Activated CD8-positive, alpha-beta T cell treated with anti-CD3 and anti-CD28 coated beads, Interleukin-2, amount 10 ng/mL, durations not matched to agents 7 days and 5 days (primary cell): ENCODE measurements at regions of chr10 and their contacts with region 1.

Region 1: DNA sequence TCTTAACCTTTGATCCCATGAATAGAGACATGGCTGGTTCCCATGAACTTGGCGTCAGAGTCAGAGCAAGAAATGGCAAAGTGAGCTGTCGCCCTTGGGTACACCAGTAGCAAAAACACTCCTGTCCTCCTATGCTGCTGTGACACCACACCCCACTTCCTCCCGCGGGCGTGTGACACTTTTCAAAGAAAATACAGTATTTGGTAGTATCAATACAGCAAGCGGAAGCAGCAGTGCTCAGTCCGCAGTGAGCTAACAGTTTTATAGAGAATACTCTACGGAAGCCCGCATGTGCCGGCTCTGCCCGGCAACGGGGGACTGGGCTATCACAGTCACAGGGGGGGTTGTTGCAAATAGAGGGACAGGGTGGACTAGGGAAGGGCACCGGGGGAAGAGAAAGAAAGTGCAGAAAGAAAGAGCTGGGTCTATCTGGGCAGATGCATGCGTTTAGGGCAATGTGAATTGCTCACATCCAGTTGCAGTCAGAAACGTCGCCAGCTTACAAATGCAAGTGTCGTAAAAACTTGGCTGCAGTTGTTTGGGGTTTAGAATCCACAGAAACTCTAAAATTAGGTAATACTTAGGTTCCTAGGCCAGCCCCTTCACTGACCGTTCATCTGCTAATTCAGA is 49.8 kb downstream of the PRKCQ start:
- DNase-seq: peak; percentile 93
- ATAC-seq: peak; percentile 98
- H3K4me3 Mint-ChIP-seq: peak overlapping the region; percentile 77
- H3K27ac Mint-ChIP-seq: peak overlapping the region; percentile 98
- H3K4me1 Mint-ChIP-seq: peaks cover 85% of the 10 kb centered on the region
- H3K27me3 Mint-ChIP-seq: no peaks in the 10 kb centered on the region

Region 2: DNA sequence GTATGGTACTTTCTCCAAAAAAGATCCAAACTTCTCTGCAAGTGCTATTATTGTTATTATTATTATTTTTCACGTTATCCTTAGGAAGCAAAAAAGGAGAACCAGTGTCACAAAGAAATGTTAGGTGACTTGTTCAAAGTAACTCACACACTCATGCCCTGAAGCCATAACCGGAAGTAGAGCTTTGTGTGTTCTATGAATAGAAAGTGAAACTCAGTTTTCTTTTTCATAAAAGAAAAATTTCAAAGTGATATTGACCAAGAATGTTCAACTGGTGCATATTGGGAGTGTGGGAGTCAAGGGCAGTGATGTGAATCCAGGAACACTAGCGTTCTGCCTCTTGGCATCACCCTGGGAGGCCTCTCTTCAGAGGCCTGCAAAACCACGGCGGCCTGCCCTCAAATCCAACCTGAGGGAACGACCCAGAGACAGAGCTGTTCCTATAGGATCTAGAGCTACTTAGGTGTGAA is 56.4 kb before region 1 on chr10:
- CTCF ChIA-PET with region 1: interaction called, 16 read pairs
- POLR2A ChIA-PET with region 1: interaction called, 8 read pairs
- DNase-seq: peak; percentile 59
- ATAC-seq: peak; percentile 86
- H3K4me3 Mint-ChIP-seq: peak overlapping the region; percentile 90
- H3K27ac Mint-ChIP-seq: peak overlapping the region; percentile 99
- H3K4me1 Mint-ChIP-seq: peaks cover 64% of the 10 kb centered on the region
- H3K27me3 Mint-ChIP-seq: no peaks in the 10 kb centered on the region

Region 3: DNA sequence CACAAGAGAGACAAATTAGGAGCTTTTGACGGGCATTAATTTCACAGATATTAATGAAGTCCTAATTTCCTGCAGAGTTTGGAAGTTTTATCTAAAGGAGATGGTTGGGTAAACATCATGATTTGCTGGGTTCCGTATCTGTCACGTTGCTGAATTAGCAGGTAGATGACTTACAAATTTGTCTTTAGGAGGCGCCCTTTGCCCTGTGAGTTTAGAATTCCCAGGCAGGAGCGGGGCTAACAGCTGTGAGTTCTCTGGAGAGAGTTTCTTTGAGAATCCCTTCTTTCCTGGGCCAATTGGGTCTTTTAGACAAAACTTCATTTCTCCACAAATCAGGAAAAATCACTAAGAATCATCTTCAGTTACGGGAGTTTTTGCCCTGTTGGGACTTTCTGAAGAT is 14.0 kb before region 1 on chr10:
- CTCF ChIA-PET with region 1: interaction called, 10 read pairs
- POLR2A ChIA-PET with region 1: interaction called, 12 read pairs
- DNase-seq: peak; percentile 16
- ATAC-seq: no peak
- H3K4me3 Mint-ChIP-seq: no peak overlapping the region
- H3K27ac Mint-ChIP-seq: no peak overlapping the region
- H3K4me1 Mint-ChIP-seq: peaks cover 88% of the 10 kb centered on the region
- H3K27me3 Mint-ChIP-seq: no peaks in the 10 kb centered on the region

Region 4: DNA sequence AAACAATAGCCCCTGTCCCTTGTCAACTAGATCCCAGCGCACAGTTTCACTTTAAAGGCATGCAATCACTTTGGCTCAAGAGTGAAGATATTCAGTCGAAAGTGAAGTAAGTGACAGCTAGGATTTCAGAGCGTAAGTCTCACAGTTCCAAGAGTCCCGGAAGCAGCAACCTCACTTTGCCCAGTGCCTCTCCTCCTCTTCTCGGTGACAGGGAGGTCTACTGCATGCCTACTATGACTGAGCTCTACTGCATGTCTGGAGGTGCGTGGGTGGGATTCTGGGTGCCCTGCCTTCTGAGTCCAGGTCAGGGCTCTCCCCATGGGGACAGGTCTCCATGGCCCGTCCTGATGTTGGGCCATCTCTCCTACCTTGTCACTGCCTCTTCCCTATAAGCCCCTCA is 32.7 kb after region 1 on chr10:
- CTCF ChIA-PET with region 1: interaction called, 14 read pairs
- POLR2A ChIA-PET with region 1: interaction called, 9 read pairs
- DNase-seq: peak; percentile 67
- ATAC-seq: peak; percentile 82
- H3K4me3 Mint-ChIP-seq: peak overlapping the region; percentile 75
- H3K27ac Mint-ChIP-seq: peak overlapping the region; percentile 92
- H3K4me1 Mint-ChIP-seq: peaks cover 89% of the 10 kb centered on the region
- H3K27me3 Mint-ChIP-seq: no peaks in the 10 kb centered on the region